Gastrocnemius medialis (tissue), 4 donors: ENCODE measurements at regions of chr10 and their contacts with region 1.

Region 1: GRCh38 chr10:33330543-33331378 is 3.7 kb downstream of the NRP1 start:
- DNase-seq: peak; percentile 70 to 75
- ATAC-seq: peak; percentile 28 to 34
- H3K4me3 ChIP-seq: peak overlapping the region; percentile 82 to 98 (median 91)
- H3K27ac ChIP-seq: peak overlapping the region; percentile 87 to 94 (median 93)
- H3K4me1 ChIP-seq: peaks cover 66 to 67% of the 10 kb centered on the region in 2 donors
- H3K27me3 ChIP-seq: no peaks in the 10 kb centered on the region
- CTCF ChIP-seq: peak; percentile 76 to 92 (median 82)
- POLR2A ChIP-seq: no peak

Region 2: GRCh38 chr10:32958085-32959005 is 372.4 kb before region 1 on chr10 and contains the start of gene ITGB1:
- in situ Hi-C with region 1: no loop called
- intact Hi-C with region 1: loop called (anchors 10 kb)
- DNase-seq: peak; percentile 94 to 96
- ATAC-seq: peak; percentile 87 to 90
- H3K4me3 ChIP-seq: peak within 1 kb of the TSS; percentile 72 to 96 (median 76)
- H3K27ac ChIP-seq: peak within 1 kb of the TSS; percentile 93 to 98 (median 96)
- H3K4me1 ChIP-seq: peaks cover 53 to 64% of the 10 kb centered on the region in 2 donors
- H3K27me3 ChIP-seq: no peaks in the 10 kb centered on the region
- CTCF ChIP-seq: no peak
- POLR2A ChIP-seq: peak; percentile 94 to 97
- total RNA-seq, gene ITGB1: 242 to 379 (median 368) TPM

Region 3: GRCh38 chr10:33193057-33193700 is 137.6 kb before region 1 on chr10:
- in situ Hi-C with region 1: loop called in 1 of 4 experiments (anchors 10 kb)
- intact Hi-C with region 1: loop called (anchors 5 kb)
- DNase-seq: peak; percentile 64 to 72
- ATAC-seq: peak; percentile 79 to 91
- H3K4me3 ChIP-seq: no peak overlapping the region
- H3K27ac ChIP-seq: peak overlapping the region; percentile 12 to 51 (median 40)
- H3K4me1 ChIP-seq: peaks cover 0 to 31% of the 10 kb centered on the region in 2 donors
- H3K27me3 ChIP-seq: no peaks in the 10 kb centered on the region
- CTCF ChIP-seq: peak; percentile 49 to 84 (median 73)
- POLR2A ChIP-seq: no peak

Region 4: GRCh38 chr10:33460505-33461294 is 129.9 kb after region 1 on chr10:
- in situ Hi-C with region 1: no loop called
- intact Hi-C with region 1: loop called (anchors 5 kb)
- DNase-seq: peak; percentile 57 to 78
- ATAC-seq: peak; percentile 90 to 97
- H3K4me3 ChIP-seq: no peak overlapping the region
- H3K27ac ChIP-seq: peak overlapping the region; percentile 53 to 80 (median 62)
- H3K4me1 ChIP-seq: peaks cover 17 to 18% of the 10 kb centered on the region in 2 donors
- H3K27me3 ChIP-seq: no peaks in the 10 kb centered on the region
- CTCF ChIP-seq: no peak
- POLR2A ChIP-seq: no peak

Region 5: DNA sequence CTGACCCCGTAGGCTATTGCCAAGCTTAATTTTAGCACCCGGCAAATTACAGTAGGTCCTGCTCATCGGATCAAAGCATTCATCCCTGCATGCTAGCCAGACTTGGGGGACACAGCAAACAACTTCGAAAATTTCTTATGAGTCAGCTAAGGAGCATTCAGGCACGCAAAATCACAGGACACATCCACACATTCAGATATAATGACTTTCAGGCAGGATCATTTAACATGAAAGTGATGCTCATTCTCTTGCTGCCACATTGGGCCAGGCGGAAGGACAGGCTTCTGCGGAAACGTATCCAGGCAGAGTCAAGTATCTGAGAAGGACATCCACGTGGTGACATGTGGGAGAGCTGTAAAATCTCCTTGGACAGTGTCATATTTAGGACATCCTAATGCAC is 477.7 kb after region 1 on chr10:
- in situ Hi-C with region 1: no loop called
- intact Hi-C with region 1: loop called (anchors 5 kb)
- DNase-seq: peak; percentile 64 to 67
- ATAC-seq: peak; percentile 77 to 94
- H3K4me3 ChIP-seq: no peak overlapping the region
- H3K27ac ChIP-seq: peak overlapping the region; percentile 59 to 80 (median 77)
- H3K4me1 ChIP-seq: peaks cover 18 to 30% of the 10 kb centered on the region in 2 donors
- H3K27me3 ChIP-seq: no peaks in the 10 kb centered on the region
- CTCF ChIP-seq: no peak
- POLR2A ChIP-seq: no peak

Region 6: DNA sequence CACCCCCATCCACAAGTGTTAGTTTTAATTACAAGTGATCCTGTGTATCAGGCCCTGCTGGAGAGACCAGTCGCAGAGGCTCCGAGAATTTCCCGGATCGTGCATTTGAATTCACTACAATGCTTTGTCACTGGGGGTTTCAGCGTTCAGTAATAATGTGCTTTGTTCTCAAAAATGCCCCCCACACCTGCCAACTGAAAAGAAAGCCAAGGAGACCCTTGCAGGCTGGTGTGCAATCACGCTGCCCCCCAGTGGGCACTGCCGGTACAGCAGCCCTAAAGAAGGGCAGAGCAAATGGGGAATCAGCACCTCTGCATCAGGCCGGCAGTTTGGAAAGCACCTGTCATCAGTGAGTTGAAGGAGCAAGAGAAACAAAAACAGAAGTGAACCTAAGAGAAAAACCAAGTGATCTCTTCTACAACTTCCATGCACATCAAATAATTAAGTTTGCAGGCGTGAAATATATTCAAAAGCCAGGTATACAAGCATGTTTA is 1306.7 kb after region 1 on chr10:
- in situ Hi-C with region 1: loop called in 2 of 4 experiments (anchors 10 kb)
- intact Hi-C with region 1: loop called (anchors 2 kb)
- DNase-seq: peak in 1 of 2 donors; percentile 38
- ATAC-seq: peak; percentile 28 to 44
- H3K4me3 ChIP-seq: no peak overlapping the region
- H3K27ac ChIP-seq: no peak overlapping the region
- H3K4me1 ChIP-seq: peaks cover 15 to 24% of the 10 kb centered on the region in 2 donors
- H3K27me3 ChIP-seq: no peaks in the 10 kb centered on the region
- CTCF ChIP-seq: peak; percentile 77 to 95 (median 86)
- POLR2A ChIP-seq: no peak